Naive thymus-derived CD4-positive, alpha-beta T cell (primary cell): ENCODE measurements at regions of chr5 and their contacts with region 1.

Region 1: GRCh38 chr5:55102348-55102747 is at the start of gene GZMA:
- DNase-seq: peak in 8 of 9 donors; percentile 47 to 86 (median 80)
- ATAC-seq: peak; percentile 87
- H3K4me3 ChIP-seq: peak within 1 kb of the TSS; percentile 66
- H3K4me3 Mint-ChIP-seq: peak within 1 kb of the TSS; percentile 83 to 93 (median 89)
- H3K27ac ChIP-seq: peak within 1 kb of the TSS; percentile 21
- H3K27ac Mint-ChIP-seq: peak within 1 kb of the TSS; percentile 77 to 93 (median 90)
- H3K4me1 ChIP-seq: peaks cover 42 to 47% of the 10 kb centered on the region in 2 donors
- H3K4me1 Mint-ChIP-seq: peaks cover 44 to 92% (median 80%) of the 10 kb centered on the region in 7 donors
- H3K27me3 ChIP-seq: no peaks in the 10 kb centered on the region
- H3K27me3 Mint-ChIP-seq: no peaks in the 10 kb centered on the region
- total RNA-seq, gene GZMA: 2.0 to 1,076 (median 10.9) TPM

Region 2: DNA sequence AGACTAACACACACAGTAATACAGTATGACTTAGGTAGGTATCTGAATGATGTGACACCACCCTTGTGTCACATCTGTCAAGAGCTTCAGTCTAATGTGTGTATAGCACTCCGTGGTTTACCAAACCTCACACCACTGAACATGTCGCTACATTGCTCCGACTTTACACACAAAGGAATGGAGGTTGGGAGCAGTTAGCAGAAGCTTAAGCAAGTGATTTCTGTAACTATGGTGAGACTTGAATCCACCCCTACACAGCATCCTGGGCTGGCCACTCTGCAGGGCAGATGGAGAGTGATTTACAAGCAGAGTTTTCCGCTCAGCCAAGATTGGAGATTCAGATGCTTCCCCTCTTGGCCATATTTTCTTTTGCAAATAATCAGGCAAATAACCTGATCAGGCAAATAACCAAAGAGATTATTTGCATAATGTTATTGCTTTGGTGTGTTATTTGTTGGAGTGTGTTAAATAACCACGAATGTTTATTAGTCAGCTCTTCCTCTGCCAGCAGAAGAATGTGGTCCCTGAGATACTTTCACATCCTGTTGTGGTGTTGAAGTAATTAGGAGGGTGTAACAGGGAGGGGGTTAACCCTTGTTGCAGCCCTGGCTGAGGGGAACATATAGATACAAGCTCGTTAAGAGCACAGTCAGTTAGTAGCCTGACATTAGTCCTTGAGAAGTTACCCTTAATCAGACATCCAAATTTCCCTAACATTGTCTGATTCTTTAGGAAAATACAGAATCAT is 492.0 kb before region 1 on chr5:
- CTCF ChIA-PET with region 1: no interaction called
- POLR2A ChIA-PET with region 1: no interaction called
- intact Hi-C with region 1: loop called in 1 of 2 experiments (anchors 10 kb)
- DNase-seq: peak in 6 of 9 donors; percentile 8 to 36 (median 22)
- ATAC-seq: peak; percentile 89
- H3K4me3 ChIP-seq: peak overlapping the region; percentile 23
- H3K4me3 Mint-ChIP-seq: peak overlapping the region in 9 of 10 donors; percentile 14 to 75 (median 52)
- H3K27ac ChIP-seq: no peak overlapping the region
- H3K27ac Mint-ChIP-seq: peak overlapping the region in 8 of 9 donors; percentile 4 to 88 (median 50)
- H3K4me1 ChIP-seq: peaks cover 14 to 32% of the 10 kb centered on the region in 2 donors
- H3K4me1 Mint-ChIP-seq: peaks cover 19 to 32% (median 23%) of the 10 kb centered on the region in 7 donors
- H3K27me3 ChIP-seq: no peaks in the 10 kb centered on the region
- H3K27me3 Mint-ChIP-seq: peaks cover 0 to 8% (median 0%) of the 10 kb centered on the region in 5 donors

Region 3: DNA sequence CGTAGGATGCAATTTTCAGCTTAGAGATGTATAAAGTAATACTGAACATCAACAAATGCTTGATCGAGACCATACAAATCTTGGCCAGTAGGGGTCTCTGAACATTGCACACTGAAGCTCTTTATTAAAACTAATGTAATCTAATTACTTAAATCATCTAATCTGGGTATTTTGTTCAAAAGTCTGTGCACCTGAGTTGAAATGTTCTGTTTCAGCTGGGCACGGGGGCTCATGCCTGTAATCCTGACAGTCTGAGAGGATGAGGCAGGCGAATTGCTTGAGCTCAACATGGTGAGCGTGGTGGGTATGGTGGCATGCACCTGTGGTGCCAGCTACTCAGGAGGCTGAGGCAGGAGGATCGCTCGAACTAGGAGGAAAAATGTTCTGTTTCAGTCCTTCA is 158.0 kb before region 1 on chr5:
- CTCF ChIA-PET with region 1: interaction called, 32 read pairs
- POLR2A ChIA-PET with region 1: interaction called, 6 read pairs
- intact Hi-C with region 1: loop called (anchors 1 kb)
- DNase-seq: peak in 7 of 9 donors; percentile 18 to 61 (median 51)
- ATAC-seq: peak; percentile 63
- H3K4me3 ChIP-seq: no peak overlapping the region
- H3K4me3 Mint-ChIP-seq: no peak overlapping the region
- H3K27ac ChIP-seq: no peak overlapping the region
- H3K27ac Mint-ChIP-seq: no peak overlapping the region
- H3K4me1 ChIP-seq: no peaks in the 10 kb centered on the region
- H3K4me1 Mint-ChIP-seq: peaks cover 0 to 32% (median 0%) of the 10 kb centered on the region in 7 donors
- H3K27me3 ChIP-seq: no peaks in the 10 kb centered on the region
- H3K27me3 Mint-ChIP-seq: peaks cover 0 to 18% (median 0%) of the 10 kb centered on the region in 5 donors

Region 4: DNA sequence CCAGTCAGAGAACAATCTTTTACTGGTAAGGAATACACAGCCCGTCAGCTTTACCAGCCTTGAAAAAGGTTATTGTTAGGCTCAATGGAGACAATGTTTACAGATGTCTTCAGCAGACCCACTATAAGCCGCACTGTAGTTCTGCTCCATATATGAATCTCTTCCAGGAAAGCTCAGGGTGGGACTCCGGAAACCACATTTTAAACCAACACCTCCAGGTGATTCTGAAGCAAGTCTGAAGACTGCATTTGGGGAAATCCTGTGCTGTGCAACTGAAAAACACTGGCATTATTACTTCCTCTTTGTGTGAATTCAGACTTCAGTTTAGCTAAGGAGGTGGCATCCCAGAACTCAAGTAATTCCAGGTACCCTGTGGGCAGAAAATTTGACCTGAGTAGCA is 74.8 kb before region 1 on chr5:
- CTCF ChIA-PET with region 1: interaction called, 4 read pairs
- POLR2A ChIA-PET with region 1: interaction called, 12 read pairs
- intact Hi-C with region 1: loop called in 1 of 2 experiments (anchors 1 kb)
- DNase-seq: peak in 7 of 9 donors; percentile 10 to 51 (median 36)
- ATAC-seq: peak; percentile 82
- H3K4me3 ChIP-seq: peak overlapping the region; percentile 44
- H3K4me3 Mint-ChIP-seq: peak overlapping the region; percentile 60 to 84 (median 68)
- H3K27ac ChIP-seq: no peak overlapping the region
- H3K27ac Mint-ChIP-seq: peak overlapping the region in 8 of 9 donors; percentile 25 to 92 (median 76)
- H3K4me1 ChIP-seq: peaks cover 38 to 47% of the 10 kb centered on the region in 2 donors
- H3K4me1 Mint-ChIP-seq: peaks cover 37 to 89% (median 82%) of the 10 kb centered on the region in 7 donors
- H3K27me3 ChIP-seq: no peaks in the 10 kb centered on the region
- H3K27me3 Mint-ChIP-seq: no peaks in the 10 kb centered on the region

Region 5: GRCh38 chr5:55062039-55062779 is 40.1 kb before region 1 on chr5:
- CTCF ChIA-PET with region 1: interaction called, 3 read pairs
- POLR2A ChIA-PET with region 1: interaction called, 14 read pairs
- intact Hi-C with region 1: loop called (anchors 1 kb)
- DNase-seq: peak in 7 of 9 donors; percentile 25 to 71 (median 46)
- ATAC-seq: peak; percentile 81
- H3K4me3 ChIP-seq: peak overlapping the region; percentile 33
- H3K4me3 Mint-ChIP-seq: peak overlapping the region; percentile 43 to 94 (median 82)
- H3K27ac ChIP-seq: no peak overlapping the region
- H3K27ac Mint-ChIP-seq: peak overlapping the region; percentile 17 to 98 (median 62)
- H3K4me1 ChIP-seq: peaks cover 26 to 30% of the 10 kb centered on the region in 2 donors
- H3K4me1 Mint-ChIP-seq: peaks cover 28 to 80% (median 67%) of the 10 kb centered on the region in 7 donors
- H3K27me3 ChIP-seq: no peaks in the 10 kb centered on the region
- H3K27me3 Mint-ChIP-seq: peaks cover 0 to 7% (median 0%) of the 10 kb centered on the region in 5 donors

Region 6: GRCh38 chr5:55113327-55113726 is 11.0 kb after region 1 on chr5:
- CTCF ChIA-PET with region 1: interaction called, 4 read pairs
- POLR2A ChIA-PET with region 1: interaction called, 4 read pairs
- intact Hi-C with region 1: loop called in 1 of 2 experiments (anchors 1 kb)
- DNase-seq: no peak
- ATAC-seq: peak; percentile 38
- H3K4me3 ChIP-seq: no peak overlapping the region
- H3K4me3 Mint-ChIP-seq: peak overlapping the region in 5 of 10 donors; percentile 0 to 32 (median 1)
- H3K27ac ChIP-seq: no peak overlapping the region
- H3K27ac Mint-ChIP-seq: peak overlapping the region in 5 of 9 donors; percentile 4 to 59 (median 9)
- H3K4me1 ChIP-seq: peaks cover 0 to 11% of the 10 kb centered on the region in 2 donors
- H3K4me1 Mint-ChIP-seq: peaks cover 13 to 42% (median 19%) of the 10 kb centered on the region in 7 donors
- H3K27me3 ChIP-seq: no peaks in the 10 kb centered on the region
- H3K27me3 Mint-ChIP-seq: peaks cover 0 to 5% (median 0%) of the 10 kb centered on the region in 5 donors

Region 7: GRCh38 chr5:55763746-55764420 is 661.5 kb after region 1 on chr5:
- CTCF ChIA-PET with region 1: no interaction called
- POLR2A ChIA-PET with region 1: no interaction called
- intact Hi-C with region 1: loop called in 1 of 2 experiments (anchors 10 kb)
- DNase-seq: peak in 4 of 9 donors; percentile 2 to 14 (median 8)
- ATAC-seq: peak; percentile 27
- H3K4me3 ChIP-seq: no peak overlapping the region
- H3K4me3 Mint-ChIP-seq: peak overlapping the region in 9 of 10 donors; percentile 1 to 60 (median 15)
- H3K27ac ChIP-seq: no peak overlapping the region
- H3K27ac Mint-ChIP-seq: peak overlapping the region in 1 of 9 donors; percentile 76
- H3K4me1 ChIP-seq: peaks cover 5 to 10% of the 10 kb centered on the region in 2 donors
- H3K4me1 Mint-ChIP-seq: peaks cover 9 to 38% (median 18%) of the 10 kb centered on the region in 7 donors
- H3K27me3 ChIP-seq: peaks cover 0 to 5% of the 10 kb centered on the region in 2 donors
- H3K27me3 Mint-ChIP-seq: peaks cover 4 to 18% (median 10%) of the 10 kb centered on the region in 5 donors